ENCODE measurements at regions of chr10 and their contacts with region 1.

Region 1: GRCh38 chr10:44974628-44975431 is 3.8 kb downstream of the DEPP1 start:
- DNase-seq: peak; percentile 79
- H3K4me3 ChIP-seq: peak overlapping the region; percentile 90
- H3K27ac ChIP-seq: peak overlapping the region; percentile 96
- H3K4me1 ChIP-seq: peaks cover 91% of the 10 kb centered on the region
- H3K27me3 ChIP-seq: no peaks in the 10 kb centered on the region
- CTCF ChIP-seq: peak; percentile 99

Region 2: DNA sequence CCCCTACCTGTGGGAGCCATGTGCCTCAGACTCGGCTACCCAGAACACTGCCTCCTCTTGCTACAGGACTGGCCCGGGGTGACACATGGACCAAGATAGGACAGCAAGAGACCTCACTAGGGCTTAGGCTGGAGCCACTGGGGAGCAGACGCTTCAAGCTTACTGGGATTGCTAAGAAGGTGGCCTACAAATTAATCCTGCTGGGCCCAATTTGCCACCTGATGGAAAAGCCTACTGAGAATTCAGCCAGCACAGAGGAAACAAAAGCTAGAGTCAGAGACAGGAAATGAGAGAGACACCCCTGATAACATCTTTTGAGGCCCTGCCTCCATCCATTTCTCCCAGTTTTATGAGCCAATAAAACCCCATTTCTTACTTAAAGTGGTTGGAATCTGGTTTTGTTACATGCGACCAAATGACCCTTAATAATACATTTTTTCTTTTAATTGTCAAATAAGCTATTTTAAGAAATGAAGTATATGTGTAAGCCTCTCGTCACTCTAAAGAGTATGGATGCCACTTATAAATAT is 872.0 kb before region 1 on chr10:
- intact Hi-C with region 1: no loop called
- DNase-seq: no peak
- H3K4me3 ChIP-seq: no peak overlapping the region
- H3K27ac ChIP-seq: no peak overlapping the region
- H3K4me1 ChIP-seq: no peaks in the 10 kb centered on the region
- H3K27me3 ChIP-seq: no peaks in the 10 kb centered on the region
- CTCF ChIP-seq: no peak

Region 3: GRCh38 chr10:44932517-44933450 is 42.0 kb before region 1 on chr10:
- intact Hi-C with region 1: loop called (anchors 5 kb)
- DNase-seq: peak; percentile 93
- H3K4me3 ChIP-seq: no peak overlapping the region
- H3K27ac ChIP-seq: peak overlapping the region; percentile 39
- H3K4me1 ChIP-seq: peaks cover 47% of the 10 kb centered on the region
- H3K27me3 ChIP-seq: no peaks in the 10 kb centered on the region
- CTCF ChIP-seq: peak; percentile 97

Region 4: GRCh38 chr10:45155784-45156183 is 181.0 kb after region 1 on chr10:
- intact Hi-C with region 1: no loop called
- DNase-seq: no peak
- H3K4me3 ChIP-seq: no peak overlapping the region
- H3K27ac ChIP-seq: no peak overlapping the region
- H3K4me1 ChIP-seq: no peaks in the 10 kb centered on the region
- H3K27me3 ChIP-seq: no peaks in the 10 kb centered on the region
- CTCF ChIP-seq: no peak

Measured in left ventricle myocardium inferior (tissue), 1 donor.